ENCODE measurements at regions of chr1 and their contacts with region 1.

Region 1: GRCh38 chr1:220001095-220001501 is 45.2 kb downstream of the EPRS1 start:
- DNase-seq: no peak
- H3K4me3 Mint-ChIP-seq: no peak overlapping the region
- H3K27ac Mint-ChIP-seq: no peak overlapping the region
- H3K4me1 Mint-ChIP-seq: peaks cover 11% of the 10 kb centered on the region
- H3K27me3 Mint-ChIP-seq: no peaks in the 10 kb centered on the region

Region 2: GRCh38 chr1:220013497-220013896 is 12.4 kb after region 1 on chr1:
- intact Hi-C with region 1: loop called (anchors 1 kb)
- DNase-seq: no peak
- H3K4me3 Mint-ChIP-seq: peak overlapping the region; percentile 50
- H3K27ac Mint-ChIP-seq: peak overlapping the region; percentile 75
- H3K4me1 Mint-ChIP-seq: peaks cover 33% of the 10 kb centered on the region
- H3K27me3 Mint-ChIP-seq: no peaks in the 10 kb centered on the region

Region 3: DNA sequence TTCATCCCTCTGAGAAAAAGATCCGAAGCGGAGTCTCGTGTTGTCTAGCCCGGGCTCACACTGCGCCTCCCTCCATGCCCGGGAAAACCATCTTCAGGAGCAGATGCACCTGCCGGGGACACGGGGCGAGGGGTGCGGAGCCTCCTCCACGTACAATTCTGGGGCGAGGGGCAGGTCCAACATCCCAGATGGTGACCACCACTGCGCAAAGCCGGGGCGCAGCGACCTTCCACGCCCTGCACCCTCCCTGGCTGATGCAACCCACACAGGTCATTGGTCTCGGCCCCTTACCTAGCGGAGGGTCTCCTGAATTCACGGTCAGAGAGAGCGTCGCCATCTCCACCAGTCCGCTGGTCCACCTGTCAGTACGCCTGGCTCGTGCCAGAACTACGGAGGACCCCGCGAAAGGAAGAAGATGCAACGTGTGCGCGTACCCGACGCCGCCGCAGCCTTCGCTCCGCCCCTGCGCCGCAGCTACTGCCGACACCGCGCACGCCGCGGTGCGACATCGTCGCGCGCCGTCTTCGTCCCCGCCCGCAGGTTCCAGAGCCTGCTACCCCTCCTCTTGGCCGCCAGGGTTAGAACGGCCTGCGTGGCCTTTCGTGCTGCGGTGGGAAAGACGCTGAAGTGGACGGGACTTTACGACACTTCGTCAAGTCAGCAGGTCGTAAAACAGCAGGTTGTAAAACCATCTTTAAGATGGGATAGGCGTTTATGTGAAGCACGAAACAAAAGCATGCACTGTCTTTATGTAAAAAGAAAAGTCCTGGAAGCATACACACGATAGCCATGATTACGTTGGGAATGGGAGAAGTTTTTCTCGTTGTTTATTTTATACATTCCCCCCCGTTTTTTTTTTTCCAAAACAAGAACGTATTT is 45.2 kb after region 1 on chr1 and contains the start of gene EPRS1:
- intact Hi-C with region 1: no loop called
- DNase-seq: peak; percentile 98
- H3K4me3 Mint-ChIP-seq: peak within 1 kb of the TSS; percentile 91
- H3K27ac Mint-ChIP-seq: peak within 1 kb of the TSS; percentile 92
- H3K4me1 Mint-ChIP-seq: peaks cover 37% of the 10 kb centered on the region
- H3K27me3 Mint-ChIP-seq: no peaks in the 10 kb centered on the region
- total RNA-seq, gene EPRS1: 182 and 200 TPM in 2 replicates

Region 4: GRCh38 chr1:220294846-220295301 is 293.8 kb after region 1 on chr1:
- intact Hi-C with region 1: no loop called
- DNase-seq: no peak
- H3K4me3 Mint-ChIP-seq: no peak overlapping the region
- H3K27ac Mint-ChIP-seq: no peak overlapping the region
- H3K4me1 Mint-ChIP-seq: peaks cover 2% of the 10 kb centered on the region
- H3K27me3 Mint-ChIP-seq: peaks cover 20% of the 10 kb centered on the region

Region 5: DNA sequence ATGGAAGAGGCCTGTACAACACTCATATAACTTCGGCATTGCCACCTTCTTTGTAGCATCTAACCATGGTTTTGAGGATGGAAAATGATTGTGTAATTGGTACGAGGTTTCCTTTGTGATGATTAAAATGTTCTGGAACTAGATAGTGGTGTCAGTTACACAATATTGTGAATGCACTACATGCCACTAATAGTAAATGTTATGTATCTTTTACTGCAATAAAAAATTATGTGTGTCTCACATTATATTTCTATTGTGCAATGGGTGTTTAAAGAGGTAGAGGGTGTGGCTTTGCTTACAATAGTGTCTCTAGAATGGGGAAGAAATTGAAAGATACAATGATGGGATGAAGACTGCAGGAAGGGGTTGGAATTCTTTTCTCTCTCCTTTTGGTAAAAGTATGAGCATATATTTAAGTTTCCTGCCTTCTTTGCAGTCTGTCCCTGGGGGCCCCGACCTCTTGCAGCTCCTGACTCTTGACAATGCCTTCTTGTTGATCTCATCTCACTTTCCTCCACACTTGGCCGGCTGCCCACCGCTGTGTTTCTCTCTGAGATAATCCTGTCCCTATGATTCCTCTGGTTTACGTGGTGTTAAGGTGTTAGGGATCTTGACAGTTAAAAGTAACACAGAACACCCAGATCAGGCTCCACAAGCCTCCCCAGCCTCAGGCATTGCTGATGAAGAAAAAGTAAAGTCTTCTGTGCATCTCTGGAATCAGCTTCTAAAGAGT is 824.9 kb after region 1 on chr1:
- intact Hi-C with region 1: no loop called
- DNase-seq: no peak
- H3K4me3 Mint-ChIP-seq: no peak overlapping the region
- H3K27ac Mint-ChIP-seq: no peak overlapping the region
- H3K4me1 Mint-ChIP-seq: no peaks in the 10 kb centered on the region
- H3K27me3 Mint-ChIP-seq: no peaks in the 10 kb centered on the region

Measured in activated CD4-positive, alpha-beta T cell treated with anti-CD3 and anti-CD28 coated beads, Interleukin-2, amount 10 ng/mL, durations not matched to agents 24 days and 14 days (primary cell).